Heart left ventricle (tissue), 16 donors: ENCODE measurements at regions of chr3 and their contacts with region 1.

Region 1: GRCh38 chr3:183555541-183556081 is at the start of gene KLHL6:
- DNase-seq: peak; percentile 51 to 76 (median 64)
- ATAC-seq: peak; percentile 74 to 93 (median 82)
- H3K4me3 ChIP-seq: peak within 1 kb of the TSS in 10 of 12 donors; percentile 1 to 53 (median 31)
- H3K27ac ChIP-seq: peak within 1 kb of the TSS; percentile 2 to 88 (median 70)
- H3K4me1 ChIP-seq: peaks cover 0 to 43% (median 5%) of the 10 kb centered on the region in 12 donors
- H3K27me3 ChIP-seq: no peaks in the 10 kb centered on the region
- CTCF ChIP-seq: no peak
- POLR2A ChIP-seq: peak in 1 of 2 donors; percentile 22
- total RNA-seq, gene KLHL6: 0.67 to 8.1 (median 1.1) TPM

Region 2: DNA sequence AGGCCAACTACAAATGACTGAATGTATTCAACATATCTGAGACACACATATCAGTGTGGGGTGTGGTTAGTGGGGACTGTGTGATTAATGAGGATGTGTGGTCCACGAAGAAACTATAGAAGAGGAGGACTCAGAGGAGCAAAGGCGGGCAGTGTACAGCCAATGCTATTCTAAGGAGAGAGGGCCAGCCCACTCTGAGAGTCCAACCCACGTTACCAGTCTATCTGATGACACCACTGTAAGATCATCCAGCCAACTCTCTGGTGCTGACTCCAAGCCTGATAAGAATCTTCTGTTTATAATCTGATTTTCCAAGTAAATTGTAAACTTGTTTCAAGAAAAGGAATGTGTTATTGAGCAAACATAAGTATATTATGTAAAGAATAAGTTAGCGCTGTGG is 174.4 kb before region 1 on chr3:
- intact Hi-C with region 1: no loop called
- DNase-seq: no peak
- ATAC-seq: no peak
- H3K4me3 ChIP-seq: no peak overlapping the region
- H3K27ac ChIP-seq: peak overlapping the region in 1 of 12 donors; percentile 53
- H3K4me1 ChIP-seq: peaks cover 0 to 31% (median 0%) of the 10 kb centered on the region in 12 donors
- H3K27me3 ChIP-seq: no peaks in the 10 kb centered on the region
- CTCF ChIP-seq: no peak
- POLR2A ChIP-seq: no peak

Region 3: DNA sequence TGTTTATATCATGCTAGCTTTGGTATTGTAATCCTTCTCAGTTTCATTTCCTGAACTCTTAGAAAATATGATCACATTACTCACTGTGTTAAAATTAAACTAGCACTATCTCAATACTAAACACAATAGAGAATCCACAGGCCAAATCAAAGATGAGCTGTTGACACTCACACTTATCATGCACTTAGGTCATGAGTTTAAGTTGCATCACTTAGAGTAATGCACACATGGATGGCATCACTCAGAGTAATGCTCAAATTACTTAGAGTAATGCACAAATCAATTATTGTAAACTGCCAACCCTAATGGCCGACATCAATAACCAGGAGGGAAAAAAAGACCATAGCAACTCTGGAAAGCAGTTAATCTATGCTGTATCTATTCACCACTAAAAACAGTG is 87.2 kb before region 1 on chr3:
- intact Hi-C with region 1: loop called in 2 of 10 experiments (anchors 5 to 10 kb)
- DNase-seq: no peak
- ATAC-seq: peak in 1 of 4 donors; percentile 27
- H3K4me3 ChIP-seq: no peak overlapping the region
- H3K27ac ChIP-seq: no peak overlapping the region
- H3K4me1 ChIP-seq: peaks cover 0 to 10% (median 0%) of the 10 kb centered on the region in 12 donors
- H3K27me3 ChIP-seq: no peaks in the 10 kb centered on the region
- CTCF ChIP-seq: no peak
- POLR2A ChIP-seq: no peak

Region 4: DNA sequence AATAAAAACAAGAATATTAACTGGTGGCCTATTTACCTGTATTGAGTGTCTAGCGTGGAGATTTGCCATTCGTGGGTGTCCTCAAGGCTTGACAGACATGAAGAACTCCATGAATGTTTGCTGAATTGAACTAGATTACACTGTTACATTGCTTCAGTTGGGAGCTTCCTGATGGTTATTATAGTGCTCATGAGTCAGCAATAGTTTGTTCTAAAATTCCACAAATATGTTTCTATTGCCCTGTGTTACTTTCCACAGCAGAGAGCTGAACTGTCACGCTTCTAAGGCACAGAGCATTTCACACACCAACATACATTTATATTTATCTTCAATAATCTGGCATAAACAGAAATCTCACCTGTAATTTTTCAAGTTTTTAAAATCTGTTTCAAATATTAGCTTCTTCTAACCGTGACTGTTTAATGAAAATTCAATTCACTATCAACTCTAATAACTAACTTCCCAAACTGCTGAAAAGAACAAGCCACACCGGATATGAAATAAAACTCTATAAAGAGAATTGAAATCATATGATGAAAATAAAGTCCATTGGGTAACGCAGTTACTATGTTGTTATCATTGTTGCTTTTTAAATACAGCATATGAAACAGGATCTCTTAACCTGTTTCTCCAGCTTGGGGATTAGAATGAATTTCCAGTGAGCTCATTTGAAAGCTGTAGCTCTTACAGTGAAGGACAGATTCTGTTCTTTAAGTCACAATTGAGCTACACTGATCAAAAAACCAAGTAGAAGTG is 66.0 kb before region 1 on chr3:
- intact Hi-C with region 1: loop called in 1 of 10 experiments (anchors 5 kb)
- DNase-seq: no peak
- ATAC-seq: peak in 1 of 4 donors; percentile 53
- H3K4me3 ChIP-seq: no peak overlapping the region
- H3K27ac ChIP-seq: peak overlapping the region in 6 of 12 donors; percentile 2 to 67 (median 41)
- H3K4me1 ChIP-seq: peaks cover 0 to 18% (median 10%) of the 10 kb centered on the region in 12 donors
- H3K27me3 ChIP-seq: no peaks in the 10 kb centered on the region
- CTCF ChIP-seq: no peak
- POLR2A ChIP-seq: no peak

Region 5: DNA sequence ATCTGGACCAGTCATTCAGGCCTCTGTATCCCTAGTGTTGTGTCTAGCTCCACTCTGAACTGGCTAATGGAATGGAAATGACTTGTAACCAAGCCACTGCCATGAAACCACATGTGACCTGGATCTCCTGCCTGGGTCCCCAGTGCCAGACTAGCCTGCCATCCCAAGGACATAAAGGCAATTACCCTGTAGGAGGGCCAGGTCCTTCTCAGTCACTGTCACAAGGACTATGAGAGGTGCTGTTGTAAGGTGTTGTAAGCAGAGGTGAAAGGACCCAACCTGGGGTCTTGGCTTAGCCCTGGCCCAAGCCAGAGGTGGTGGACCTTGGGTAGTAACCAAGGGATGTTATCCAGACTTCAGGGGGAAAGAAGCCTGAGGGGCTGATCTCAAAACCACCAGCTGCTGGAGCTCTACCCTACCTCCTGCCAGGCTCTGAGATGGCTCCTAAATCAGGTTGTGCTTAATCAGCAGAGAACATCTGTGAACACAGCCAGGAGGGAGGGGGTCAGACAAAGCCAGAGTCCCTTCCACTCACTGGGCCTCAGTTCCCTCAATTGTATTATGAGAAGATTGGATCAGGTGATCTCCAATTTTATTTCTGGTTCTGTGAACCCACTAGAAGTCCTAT is 64.1 kb after region 1 on chr3:
- intact Hi-C with region 1: no loop called
- DNase-seq: no peak
- ATAC-seq: peak; percentile 22 to 57 (median 39)
- H3K4me3 ChIP-seq: no peak overlapping the region
- H3K27ac ChIP-seq: no peak overlapping the region
- H3K4me1 ChIP-seq: peaks cover 0 to 11% (median 3%) of the 10 kb centered on the region in 12 donors
- H3K27me3 ChIP-seq: no peaks in the 10 kb centered on the region
- CTCF ChIP-seq: no peak
- POLR2A ChIP-seq: no peak